GM18951 (cell line): ENCODE measurements at regions of chr18 and their contacts with region 1.

Region 1: GRCh38 chr18:63523660-63524059 is 18.5 kb upstream of the SERPINB12 start:
- POLR2A ChIP-seq: no peak

Region 2: DNA sequence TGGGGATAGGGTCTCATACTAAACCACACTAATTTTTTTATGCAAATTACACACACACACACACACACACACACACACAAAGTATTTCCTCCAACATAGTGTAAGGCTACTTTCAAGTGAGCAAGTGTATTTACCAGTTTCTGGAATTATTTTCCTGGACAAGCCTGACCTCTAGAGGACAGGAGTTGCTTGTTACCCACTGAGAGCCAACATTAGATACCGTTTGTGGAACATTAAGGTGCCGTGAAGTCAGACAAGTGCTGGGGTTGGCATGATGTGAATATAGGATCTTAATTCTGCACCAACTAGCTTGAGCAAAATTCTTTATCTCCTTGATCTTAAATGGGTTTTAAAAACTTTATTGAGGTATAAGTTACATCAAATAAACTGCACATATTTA is 324.5 kb after region 1 on chr18:
- in situ Hi-C with region 1: loop called (anchors 10 kb)
- POLR2A ChIP-seq: no peak